K562 (cell line): ENCODE measurements at regions of chr20 and their contacts with region 1.

Region 1: DNA sequence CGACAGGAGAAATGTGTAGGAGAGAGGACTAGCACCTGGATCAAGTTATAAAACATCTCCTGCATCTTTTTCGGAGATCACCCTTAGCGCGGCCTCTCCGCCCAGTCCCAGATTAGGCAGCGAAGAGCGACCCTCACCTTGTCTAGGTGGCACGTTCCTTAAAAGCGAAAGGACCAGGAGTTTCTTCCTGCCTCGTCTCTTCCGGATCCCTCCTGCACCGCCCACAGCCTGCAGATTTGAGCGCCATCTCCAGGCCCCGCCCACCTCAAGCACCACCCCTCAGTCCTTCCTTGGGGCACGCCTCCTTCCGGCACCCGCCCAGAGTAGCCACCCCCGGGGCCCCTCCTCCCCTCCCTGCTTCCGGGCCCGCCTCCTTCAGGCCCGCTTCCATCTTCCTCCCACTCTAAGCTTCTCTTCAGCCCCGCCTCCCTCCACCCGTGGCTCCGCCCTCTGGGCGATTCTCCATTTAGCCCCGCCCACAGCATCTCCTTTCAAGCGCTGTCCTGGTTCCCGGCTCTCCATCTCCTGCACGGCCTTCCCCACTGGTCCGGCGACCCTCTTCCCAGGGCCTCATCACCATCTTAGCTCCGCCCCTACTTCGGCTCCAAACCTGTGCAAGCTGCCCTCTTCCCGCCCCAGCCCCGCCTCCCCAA is 662 bp upstream of the RALY start:
- DNase-seq: peak; percentile 98 to 99 (median 98)
- ATAC-seq: peak; percentile 88
- H3K4me3 ChIP-seq: peak overlapping the region; percentile 97
- H3K27ac ChIP-seq: peak overlapping the region; percentile 94
- H3K4me1 ChIP-seq: peaks cover 23 to 33% of the 10 kb centered on the region in 2 experiments
- H3K27me3 ChIP-seq: no peaks in the 10 kb centered on the region
- CTCF ChIP-seq: no peak
- EP300 ChIP-seq: no peak; the same call in 1 of the 2 replicates
- POLR2A ChIP-seq: peak; percentile 93
- RAD21 ChIP-seq: no peak

Region 2: GRCh38 chr20:33489495-33490022 is 503.5 kb before region 1 on chr20:
- CTCF ChIA-PET with region 1: no interaction called
- POLR2A ChIA-PET with region 1: no interaction called
- in situ Hi-C with region 1: no loop called
- intact Hi-C with region 1: loop called (anchors 5 kb)
- DNase-seq: peak; percentile 98 to 99 (median 99)
- ATAC-seq: peak; percentile 97
- H3K4me3 ChIP-seq: peak overlapping the region; percentile 41
- H3K27ac ChIP-seq: peak overlapping the region; percentile 94
- H3K4me1 ChIP-seq: peaks cover 0 to 20% of the 10 kb centered on the region in 2 experiments; a peak in 3 of 5 replicates
- H3K27me3 ChIP-seq: no peaks in the 10 kb centered on the region
- CTCF ChIP-seq: no peak
- EP300 ChIP-seq: no peak
- POLR2A ChIP-seq: peak; percentile 93
- RAD21 ChIP-seq: no peak

Region 3: GRCh38 chr20:33803921-33804337 is 189.1 kb before region 1 on chr20:
- CTCF ChIA-PET with region 1: no interaction called
- POLR2A ChIA-PET with region 1: no interaction called
- in situ Hi-C with region 1: no loop called
- intact Hi-C with region 1: no loop called
- DNase-seq: no peak
- ATAC-seq: no peak
- H3K4me3 ChIP-seq: no peak overlapping the region
- H3K27ac ChIP-seq: no peak overlapping the region
- H3K4me1 ChIP-seq: no peaks in the 10 kb centered on the region; a peak in 1 of 5 replicates
- H3K27me3 ChIP-seq: no peaks in the 10 kb centered on the region
- CTCF ChIP-seq: no peak
- EP300 ChIP-seq: no peak
- POLR2A ChIP-seq: no peak
- RAD21 ChIP-seq: no peak

Region 4: GRCh38 chr20:34010405-34010931 is 17.4 kb after region 1 on chr20:
- CTCF ChIA-PET with region 1: no interaction called
- POLR2A ChIA-PET with region 1: interaction called, 11 read pairs
- in situ Hi-C with region 1: no loop called
- intact Hi-C with region 1: no loop called
- DNase-seq: no peak
- ATAC-seq: no peak
- H3K4me3 ChIP-seq: no peak overlapping the region
- H3K27ac ChIP-seq: no peak overlapping the region
- H3K4me1 ChIP-seq: peaks cover 8 to 33% of the 10 kb centered on the region in 2 experiments; a peak in 3 of 5 replicates
- H3K27me3 ChIP-seq: no peaks in the 10 kb centered on the region
- CTCF ChIP-seq: no peak
- EP300 ChIP-seq: no peak
- POLR2A ChIP-seq: no peak
- RAD21 ChIP-seq: no peak

Region 5: GRCh38 chr20:34111702-34112599 is 118.9 kb after region 1 on chr20 and contains the start of gene EIF2S2:
- CTCF ChIA-PET with region 1: no interaction called
- POLR2A ChIA-PET with region 1: interaction called, 11 read pairs
- in situ Hi-C with region 1: no loop called
- intact Hi-C with region 1: loop called (anchors 2 kb)
- DNase-seq: peak; percentile 92 to 100 (median 94)
- ATAC-seq: peak; percentile 91
- H3K4me3 ChIP-seq: peak within 1 kb of the TSS; percentile 99
- H3K27ac ChIP-seq: peak within 1 kb of the TSS; percentile 99
- H3K4me1 ChIP-seq: peaks cover 18 to 21% of the 10 kb centered on the region in 2 experiments; a peak in 4 of 5 replicates
- H3K27me3 ChIP-seq: no peaks in the 10 kb centered on the region
- CTCF ChIP-seq: no peak
- EP300 ChIP-seq: peak; percentile 16; the same call in 1 of the 2 replicates
- POLR2A ChIP-seq: peak; percentile 98
- RAD21 ChIP-seq: no peak
- polyA plus RNA-seq, gene EIF2S2: 79.7 to 92.3 TPM

Region 6: GRCh38 chr20:34676642-34677373 is 683.8 kb after region 1 on chr20 and contains the start of gene PIGU:
- CTCF ChIA-PET with region 1: no interaction called
- POLR2A ChIA-PET with region 1: no interaction called
- in situ Hi-C with region 1: no loop called
- intact Hi-C with region 1: no loop called
- DNase-seq: peak; percentile 91 to 98 (median 96)
- ATAC-seq: peak; percentile 98
- H3K4me3 ChIP-seq: peak within 1 kb of the TSS; percentile 94
- H3K27ac ChIP-seq: peak within 1 kb of the TSS; percentile 89
- H3K4me1 ChIP-seq: peaks cover 12 to 15% of the 10 kb centered on the region in 2 experiments; a peak in 4 of 5 replicates
- H3K27me3 ChIP-seq: no peaks in the 10 kb centered on the region
- CTCF ChIP-seq: no peak
- EP300 ChIP-seq: no peak
- POLR2A ChIP-seq: peak; percentile 93
- RAD21 ChIP-seq: no peak
- polyA plus RNA-seq, gene PIGU: 6.5 to 14.2 TPM